CD4-positive, alpha-beta T cell (primary cell): ENCODE measurements at regions of chr9 and their contacts with region 1.

Region 1: GRCh38 chr9:136790927-136791641 is at the start of gene TMEM141:
- DNase-seq: peak; percentile 99 to 100 (median 100)
- ATAC-seq: peak; percentile 83
- H3K4me3 ChIP-seq: peak within 1 kb of the TSS; percentile 77
- H3K4me3 Mint-ChIP-seq: peak within 1 kb of the TSS; percentile 91
- H3K27ac ChIP-seq: peak within 1 kb of the TSS; percentile 95
- H3K27ac Mint-ChIP-seq: peak within 1 kb of the TSS; percentile 99
- H3K4me1 ChIP-seq: peaks cover 30% of the 10 kb centered on the region
- H3K4me1 Mint-ChIP-seq: peaks cover 41% of the 10 kb centered on the region
- H3K27me3 ChIP-seq: no peaks in the 10 kb centered on the region
- H3K27me3 Mint-ChIP-seq: no peaks in the 10 kb centered on the region
- CTCF ChIP-seq: no peak
- total RNA-seq, gene TMEM141: 14.6 to 17.1 TPM

Region 2: GRCh38 chr9:136292591-136293448 is 498.3 kb before region 1 on chr9:
- CTCF ChIA-PET with region 1: no interaction called
- POLR2A ChIA-PET with region 1: no interaction called
- intact Hi-C with region 1: no loop called
- DNase-seq: no peak
- ATAC-seq: no peak
- H3K4me3 ChIP-seq: no peak overlapping the region
- H3K4me3 Mint-ChIP-seq: no peak overlapping the region
- H3K27ac ChIP-seq: no peak overlapping the region
- H3K27ac Mint-ChIP-seq: no peak overlapping the region
- H3K4me1 ChIP-seq: no peaks in the 10 kb centered on the region
- H3K4me1 Mint-ChIP-seq: no peaks in the 10 kb centered on the region
- H3K27me3 ChIP-seq: no peaks in the 10 kb centered on the region
- H3K27me3 Mint-ChIP-seq: no peaks in the 10 kb centered on the region
- CTCF ChIP-seq: no peak

Region 3: GRCh38 chr9:136629752-136630661 is 161.1 kb before region 1 on chr9:
- CTCF ChIA-PET with region 1: no interaction called
- POLR2A ChIA-PET with region 1: no interaction called
- intact Hi-C with region 1: no loop called
- DNase-seq: peak; percentile 40 to 76 (median 57)
- ATAC-seq: peak; percentile 64
- H3K4me3 ChIP-seq: no peak overlapping the region
- H3K4me3 Mint-ChIP-seq: no peak overlapping the region
- H3K27ac ChIP-seq: no peak overlapping the region
- H3K27ac Mint-ChIP-seq: no peak overlapping the region
- H3K4me1 ChIP-seq: peaks cover 27% of the 10 kb centered on the region
- H3K4me1 Mint-ChIP-seq: no peaks in the 10 kb centered on the region
- H3K27me3 ChIP-seq: no peaks in the 10 kb centered on the region
- H3K27me3 Mint-ChIP-seq: no peaks in the 10 kb centered on the region
- CTCF ChIP-seq: peak; percentile 47

Region 4: DNA sequence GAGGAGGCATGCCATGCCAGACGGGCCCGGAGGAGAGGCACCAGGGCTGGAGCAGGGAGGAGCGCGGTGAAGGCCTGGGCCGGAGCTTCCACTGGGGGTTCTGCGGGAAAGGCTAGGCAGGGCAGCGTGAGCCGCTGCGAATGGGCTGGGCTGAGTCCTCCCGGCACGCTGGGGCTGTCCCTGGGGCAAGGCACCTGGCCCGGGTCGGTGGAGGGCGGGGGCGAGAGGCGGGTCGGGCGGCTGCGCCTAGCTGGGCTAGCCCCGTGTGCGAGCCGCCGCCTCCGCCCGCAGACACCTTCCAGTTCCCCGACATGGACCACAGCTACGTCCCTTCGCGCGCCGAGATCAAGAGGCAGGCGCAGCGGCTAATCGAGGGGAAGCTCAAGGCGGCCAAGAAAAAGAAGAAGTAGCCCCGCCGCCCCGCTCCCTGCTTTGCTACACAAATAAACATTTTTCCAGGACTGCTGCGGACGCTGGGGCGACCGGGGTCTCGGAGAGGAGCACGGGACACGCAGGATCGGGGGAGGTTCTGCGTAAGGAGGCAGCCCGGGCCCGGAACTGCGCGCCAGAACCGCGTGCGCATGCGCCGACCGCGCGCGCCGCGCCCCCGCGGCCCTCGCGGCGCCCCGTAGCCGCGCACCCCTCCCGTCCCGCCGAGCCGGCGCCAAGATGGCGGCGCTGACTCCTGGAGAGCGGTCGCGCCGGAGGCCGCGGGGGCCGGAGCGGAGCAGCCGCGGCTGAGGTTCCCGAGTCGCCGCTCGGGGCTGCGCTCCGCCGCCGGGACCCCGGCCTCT is 16.4 kb after region 1 on chr9 and contains the start of gene RABL6:
- CTCF ChIA-PET with region 1: interaction called, 6 read pairs
- POLR2A ChIA-PET with region 1: interaction called, 30 read pairs
- intact Hi-C with region 1: no loop called
- DNase-seq: peak; percentile 60 to 94 (median 78)
- ATAC-seq: peak; percentile 88
- H3K4me3 ChIP-seq: peak within 1 kb of the TSS; percentile 68
- H3K4me3 Mint-ChIP-seq: peak within 1 kb of the TSS; percentile 90
- H3K27ac ChIP-seq: peak within 1 kb of the TSS; percentile 53 to 81
- H3K27ac Mint-ChIP-seq: peak within 1 kb of the TSS; percentile 81
- H3K4me1 ChIP-seq: peaks cover 49% of the 10 kb centered on the region
- H3K4me1 Mint-ChIP-seq: peaks cover 37% of the 10 kb centered on the region
- H3K27me3 ChIP-seq: no peaks in the 10 kb centered on the region
- H3K27me3 Mint-ChIP-seq: no peaks in the 10 kb centered on the region
- CTCF ChIP-seq: no peak
- total RNA-seq, gene RABL6: 46.4 to 48.5 TPM

Region 5: DNA sequence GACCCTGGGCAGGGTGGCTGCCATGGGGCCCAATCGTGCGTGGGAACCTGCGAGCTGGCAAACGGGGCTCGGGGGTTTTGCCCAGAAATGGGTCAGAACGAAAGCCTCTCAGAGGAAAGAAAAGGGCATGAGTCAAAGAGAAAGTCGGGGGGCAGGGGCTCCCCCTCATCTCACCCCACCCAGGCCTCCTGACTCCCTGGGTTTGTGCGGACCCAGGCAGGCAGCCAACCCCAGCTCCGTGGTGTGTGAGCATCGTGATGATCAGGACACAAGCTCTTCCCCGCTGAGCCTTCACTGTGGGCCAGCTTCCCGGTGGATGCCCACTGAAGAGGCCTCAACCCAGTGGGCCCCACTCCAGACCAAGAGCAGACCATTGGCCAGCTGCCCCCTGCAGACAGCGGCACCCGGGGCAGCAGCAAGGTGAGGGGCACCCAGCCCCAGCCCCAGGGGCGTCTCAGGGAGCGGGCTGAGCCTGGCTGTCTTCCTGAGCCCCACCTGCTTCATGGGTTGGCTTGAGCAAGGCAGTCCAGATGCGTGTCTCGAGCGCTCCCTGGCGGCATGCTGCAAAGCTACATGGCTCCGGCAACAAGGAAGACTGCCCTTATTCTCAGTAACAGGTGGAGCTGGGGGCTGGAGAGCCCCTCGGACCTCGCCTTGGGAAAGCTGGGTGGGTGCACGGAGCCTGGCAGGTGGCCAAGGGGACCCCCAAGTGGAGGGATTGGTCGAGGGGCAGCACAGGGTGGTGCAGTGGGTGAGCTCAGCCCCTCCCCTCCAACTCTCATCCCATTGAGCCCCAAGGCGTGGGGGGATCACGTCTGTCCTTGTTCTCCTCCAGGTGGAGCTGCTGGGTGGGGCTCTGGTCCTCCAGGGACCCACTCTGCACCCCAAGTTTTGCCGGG is 244.0 kb after region 1 on chr9:
- CTCF ChIA-PET with region 1: interaction called, 18 read pairs
- POLR2A ChIA-PET with region 1: interaction called, 9 read pairs
- intact Hi-C with region 1: loop called (anchors 1 kb)
- DNase-seq: peak; percentile 80 to 95 (median 84)
- ATAC-seq: peak; percentile 88
- H3K4me3 ChIP-seq: peak overlapping the region; percentile 51
- H3K4me3 Mint-ChIP-seq: peak overlapping the region; percentile 68
- H3K27ac ChIP-seq: peak overlapping the region in 1 of 2 donors; percentile 60
- H3K27ac Mint-ChIP-seq: peak overlapping the region; percentile 64
- H3K4me1 ChIP-seq: peaks cover 50% of the 10 kb centered on the region
- H3K4me1 Mint-ChIP-seq: peaks cover 41% of the 10 kb centered on the region
- H3K27me3 ChIP-seq: no peaks in the 10 kb centered on the region
- H3K27me3 Mint-ChIP-seq: no peaks in the 10 kb centered on the region
- CTCF ChIP-seq: peak; percentile 95

Region 6: GRCh38 chr9:137070201-137070905 is 279.3 kb after region 1 on chr9 and contains the start of gene SAPCD2:
- CTCF ChIA-PET with region 1: no interaction called
- POLR2A ChIA-PET with region 1: interaction called, 3 read pairs
- intact Hi-C with region 1: loop called (anchors 2 to 10 kb)
- DNase-seq: peak; percentile 68 to 94 (median 78)
- ATAC-seq: peak; percentile 88
- H3K4me3 ChIP-seq: peak within 1 kb of the TSS; percentile 45
- H3K4me3 Mint-ChIP-seq: peak within 1 kb of the TSS; percentile 82
- H3K27ac ChIP-seq: no peak within 1 kb of the TSS
- H3K27ac Mint-ChIP-seq: peak within 1 kb of the TSS; percentile 24
- H3K4me1 ChIP-seq: peaks cover 28% of the 10 kb centered on the region
- H3K4me1 Mint-ChIP-seq: peaks cover 16% of the 10 kb centered on the region
- H3K27me3 ChIP-seq: peaks cover 0 to 8% of the 10 kb centered on the region in 2 experiments
- H3K27me3 Mint-ChIP-seq: peaks cover 4% of the 10 kb centered on the region
- CTCF ChIP-seq: no peak
- total RNA-seq, gene SAPCD2: 0.17 to 0.19 TPM

Region 7: DNA sequence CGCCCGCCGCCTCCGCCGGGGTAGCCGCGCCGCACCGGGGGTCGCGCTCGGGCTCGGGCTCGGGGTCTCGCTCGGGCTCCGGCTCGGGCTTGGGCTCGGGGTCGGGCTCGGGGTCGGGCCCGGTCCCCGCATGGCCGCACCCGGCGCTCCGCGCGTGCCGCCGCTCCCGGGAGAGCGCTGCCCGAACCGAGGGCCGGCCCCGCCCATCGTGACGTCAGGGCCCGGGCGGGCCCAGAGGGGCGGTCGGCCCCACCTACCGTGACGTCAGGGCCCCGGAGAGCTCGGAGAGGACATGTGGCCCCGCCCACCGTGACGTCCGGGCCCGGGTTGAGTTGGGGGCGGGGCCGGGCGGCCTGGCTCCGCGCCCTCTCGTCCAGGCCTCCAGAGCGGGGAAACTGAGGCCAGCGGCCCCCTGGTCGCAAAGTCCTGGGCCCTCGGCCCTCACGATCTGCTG is 668.1 kb after region 1 on chr9 and contains the start of gene NSMF:
- CTCF ChIA-PET with region 1: no interaction called
- POLR2A ChIA-PET with region 1: no interaction called
- intact Hi-C with region 1: loop called in 1 of 2 experiments (anchors 10 kb)
- DNase-seq: peak; percentile 88 to 98 (median 94)
- ATAC-seq: peak; percentile 67
- H3K4me3 ChIP-seq: peak within 1 kb of the TSS; percentile 57
- H3K4me3 Mint-ChIP-seq: peak within 1 kb of the TSS; percentile 77
- H3K27ac ChIP-seq: peak within 1 kb of the TSS; percentile 77 to 79
- H3K27ac Mint-ChIP-seq: peak within 1 kb of the TSS; percentile 95
- H3K4me1 ChIP-seq: peaks cover 86% of the 10 kb centered on the region
- H3K4me1 Mint-ChIP-seq: peaks cover 46% of the 10 kb centered on the region
- H3K27me3 ChIP-seq: no peaks in the 10 kb centered on the region
- H3K27me3 Mint-ChIP-seq: no peaks in the 10 kb centered on the region
- CTCF ChIP-seq: no peak
- total RNA-seq, gene NSMF: 104 to 109 TPM